CD4-positive, alpha-beta T cell (primary cell): ENCODE measurements at regions of chr4 and their contacts with region 1.

Region 1: GRCh38 chr4:139177868-139178611 is 1.0 kb upstream of the ELF2 start:
- DNase-seq: peak; percentile 80 to 96 (median 90)
- ATAC-seq: peak; percentile 74
- H3K4me3 ChIP-seq: peak overlapping the region; percentile 85
- H3K4me3 Mint-ChIP-seq: peak overlapping the region; percentile 96
- H3K27ac ChIP-seq: peak overlapping the region; percentile 77 to 88
- H3K27ac Mint-ChIP-seq: peak overlapping the region; percentile 93
- H3K4me1 ChIP-seq: peaks cover 18% of the 10 kb centered on the region
- H3K4me1 Mint-ChIP-seq: peaks cover 26% of the 10 kb centered on the region
- H3K27me3 ChIP-seq: no peaks in the 10 kb centered on the region
- H3K27me3 Mint-ChIP-seq: no peaks in the 10 kb centered on the region
- CTCF ChIP-seq: no peak

Region 2: GRCh38 chr4:139083956-139084803 is 93.9 kb before region 1 on chr4:
- CTCF ChIA-PET with region 1: no interaction called
- POLR2A ChIA-PET with region 1: interaction called, 29 read pairs
- intact Hi-C with region 1: loop called (anchors 2 to 5 kb)
- DNase-seq: peak; percentile 65 to 94 (median 80)
- ATAC-seq: peak; percentile 44
- H3K4me3 ChIP-seq: peak overlapping the region; percentile 93
- H3K4me3 Mint-ChIP-seq: peak overlapping the region; percentile 93
- H3K27ac ChIP-seq: peak overlapping the region; percentile 94 to 96
- H3K27ac Mint-ChIP-seq: peak overlapping the region; percentile 92
- H3K4me1 ChIP-seq: peaks cover 5% of the 10 kb centered on the region
- H3K4me1 Mint-ChIP-seq: peaks cover 55% of the 10 kb centered on the region
- H3K27me3 ChIP-seq: no peaks in the 10 kb centered on the region
- H3K27me3 Mint-ChIP-seq: no peaks in the 10 kb centered on the region
- CTCF ChIP-seq: no peak

Region 3: GRCh38 chr4:139144161-139144859 is 33.7 kb before region 1 on chr4:
- CTCF ChIA-PET with region 1: no interaction called
- POLR2A ChIA-PET with region 1: no interaction called
- intact Hi-C with region 1: loop called in 1 of 2 experiments (anchors 5 kb)
- DNase-seq: peak in 3 of 14 experiments; percentile 4 to 41 (median 35)
- ATAC-seq: no peak
- H3K4me3 ChIP-seq: no peak overlapping the region
- H3K4me3 Mint-ChIP-seq: no peak overlapping the region
- H3K27ac ChIP-seq: no peak overlapping the region
- H3K27ac Mint-ChIP-seq: no peak overlapping the region
- H3K4me1 ChIP-seq: peaks cover 15% of the 10 kb centered on the region
- H3K4me1 Mint-ChIP-seq: peaks cover 30% of the 10 kb centered on the region
- H3K27me3 ChIP-seq: no peaks in the 10 kb centered on the region
- H3K27me3 Mint-ChIP-seq: no peaks in the 10 kb centered on the region
- CTCF ChIP-seq: no peak

Region 4: GRCh38 chr4:139511320-139511719 is 333.3 kb after region 1 on chr4:
- CTCF ChIA-PET with region 1: no interaction called
- POLR2A ChIA-PET with region 1: no interaction called
- intact Hi-C with region 1: no loop called
- DNase-seq: peak in 3 of 14 experiments; percentile 11 to 33 (median 18)
- ATAC-seq: peak; percentile 26
- H3K4me3 ChIP-seq: no peak overlapping the region
- H3K4me3 Mint-ChIP-seq: no peak overlapping the region
- H3K27ac ChIP-seq: no peak overlapping the region
- H3K27ac Mint-ChIP-seq: no peak overlapping the region
- H3K4me1 ChIP-seq: no peaks in the 10 kb centered on the region
- H3K4me1 Mint-ChIP-seq: no peaks in the 10 kb centered on the region
- H3K27me3 ChIP-seq: no peaks in the 10 kb centered on the region
- H3K27me3 Mint-ChIP-seq: no peaks in the 10 kb centered on the region
- CTCF ChIP-seq: no peak